Endothelial cell of umbilical vein (primary cell): ENCODE measurements at regions of chr7 and their contacts with region 1.

Region 1: DNA sequence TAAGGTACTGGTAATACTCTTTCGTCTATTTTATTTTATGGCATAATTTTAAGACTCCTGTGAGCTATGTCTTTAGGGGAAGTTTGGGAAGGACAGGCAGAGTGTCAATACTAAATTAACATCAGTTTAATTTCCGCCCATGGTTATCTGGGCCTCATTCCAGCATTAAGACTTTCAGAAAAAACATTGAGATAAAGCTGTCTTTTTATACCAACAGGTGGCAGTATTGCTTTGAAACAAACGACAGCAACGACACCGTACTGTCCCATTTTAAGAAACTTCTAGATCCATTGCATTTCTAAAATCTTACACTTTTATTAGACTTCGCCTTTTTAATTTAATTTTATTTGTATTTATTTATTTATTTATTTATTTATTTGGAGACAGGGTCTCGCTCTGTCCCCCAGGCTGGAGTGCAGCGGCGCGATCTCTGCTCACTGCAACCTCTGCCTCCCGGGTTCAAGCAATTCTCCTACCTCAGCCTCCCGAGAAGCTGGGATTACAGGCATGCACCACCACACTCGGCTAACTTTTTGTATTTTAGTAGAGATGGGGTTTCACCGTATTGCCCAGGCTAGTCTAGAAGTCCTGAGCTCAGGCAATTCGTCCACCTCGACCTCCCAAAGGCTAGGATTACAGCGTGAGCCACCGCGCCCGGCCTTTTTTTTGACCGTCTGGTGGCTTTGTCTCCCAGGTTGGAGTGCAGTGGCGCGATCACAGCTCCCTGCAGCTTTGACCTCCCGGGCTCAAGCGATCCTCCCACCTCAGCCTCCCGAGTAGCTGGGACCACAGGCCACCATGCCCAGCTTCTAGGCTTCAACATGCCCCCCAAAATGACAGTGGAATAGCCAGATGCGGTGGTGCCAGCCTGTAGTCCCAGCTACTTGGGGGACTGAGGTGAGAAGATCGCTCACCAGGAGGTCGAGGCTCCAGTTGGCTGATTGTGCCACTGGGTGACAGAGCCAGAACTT is 78.7 kb upstream of the C1GALT1 start:
- DNase-seq: peak; percentile 70
- H3K4me3 ChIP-seq: peak overlapping the region in 1 of 3 experiments; percentile 8
- H3K27ac ChIP-seq: no peak overlapping the region
- H3K4me1 ChIP-seq: peaks cover 15% of the 10 kb centered on the region
- H3K27me3 ChIP-seq: no peaks in the 10 kb centered on the region
- CTCF ChIP-seq: peak; percentile 45 to 49
- POLR2A ChIP-seq: no peak

Region 2: GRCh38 chr7:6607651-6608051 is 496.0 kb before region 1 on chr7:
- CTCF ChIA-PET with region 1: no interaction called
- POLR2A ChIA-PET with region 1: no interaction called
- dilution Hi-C with region 1: no loop called
- intact Hi-C with region 1: no loop called
- DNase-seq: no peak
- H3K4me3 ChIP-seq: no peak overlapping the region
- H3K27ac ChIP-seq: no peak overlapping the region
- H3K4me1 ChIP-seq: no peaks in the 10 kb centered on the region
- H3K27me3 ChIP-seq: no peaks in the 10 kb centered on the region
- CTCF ChIP-seq: no peak
- POLR2A ChIP-seq: no peak

Region 3: DNA sequence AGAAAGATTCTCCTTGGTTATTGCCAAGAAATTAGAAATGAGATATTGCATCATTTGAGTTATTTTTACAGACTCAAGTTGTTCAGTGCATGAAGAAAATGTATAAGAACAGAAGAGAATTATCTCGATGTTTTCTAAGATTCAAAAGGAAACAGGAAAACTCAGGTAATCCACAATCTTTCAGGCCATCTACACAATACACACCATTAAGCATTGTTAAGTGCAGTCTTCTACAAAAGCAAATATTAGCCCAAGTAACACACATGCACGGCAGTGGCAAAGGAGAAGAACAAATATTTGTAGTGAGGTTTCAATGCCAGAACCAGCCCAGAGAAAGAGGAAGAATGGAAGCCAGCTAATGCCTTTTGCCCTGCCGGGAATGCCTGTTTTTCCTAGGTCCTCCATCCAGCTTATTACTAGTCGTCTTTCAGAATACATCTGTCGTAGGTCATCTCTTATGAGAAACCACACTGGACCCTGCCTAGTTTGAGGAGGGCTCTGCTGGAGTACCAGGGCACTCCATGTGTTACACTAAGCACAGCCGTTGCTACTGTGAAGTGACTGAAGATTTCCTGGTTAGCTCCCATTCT is 11.2 kb after region 1 on chr7:
- CTCF ChIA-PET with region 1: interaction called, 18 read pairs
- POLR2A ChIA-PET with region 1: no interaction called
- dilution Hi-C with region 1: no loop called
- intact Hi-C with region 1: no loop called
- DNase-seq: no peak
- H3K4me3 ChIP-seq: no peak overlapping the region
- H3K27ac ChIP-seq: no peak overlapping the region
- H3K4me1 ChIP-seq: no peaks in the 10 kb centered on the region
- H3K27me3 ChIP-seq: peaks cover 0 to 2% of the 10 kb centered on the region in 2 experiments
- CTCF ChIP-seq: no peak
- POLR2A ChIP-seq: no peak

Region 4: GRCh38 chr7:7182156-7183060 is 78.8 kb after region 1 on chr7 and contains the start of gene C1GALT1:
- CTCF ChIA-PET with region 1: interaction called, 12 read pairs
- POLR2A ChIA-PET with region 1: interaction called, 4 read pairs
- dilution Hi-C with region 1: no loop called
- intact Hi-C with region 1: loop called (anchors 1 kb)
- DNase-seq: peak; percentile 99
- H3K4me3 ChIP-seq: peak within 1 kb of the TSS; percentile 77 to 95 (median 91)
- H3K27ac ChIP-seq: peak within 1 kb of the TSS; percentile 78
- H3K4me1 ChIP-seq: peaks cover 22% of the 10 kb centered on the region
- H3K27me3 ChIP-seq: no peaks in the 10 kb centered on the region
- CTCF ChIP-seq: peak; percentile 24 to 56
- POLR2A ChIP-seq: peak; percentile 94
- total RNA-seq, gene C1GALT1: 21.9 and 31.1 TPM in 2 replicates

Region 5: DNA sequence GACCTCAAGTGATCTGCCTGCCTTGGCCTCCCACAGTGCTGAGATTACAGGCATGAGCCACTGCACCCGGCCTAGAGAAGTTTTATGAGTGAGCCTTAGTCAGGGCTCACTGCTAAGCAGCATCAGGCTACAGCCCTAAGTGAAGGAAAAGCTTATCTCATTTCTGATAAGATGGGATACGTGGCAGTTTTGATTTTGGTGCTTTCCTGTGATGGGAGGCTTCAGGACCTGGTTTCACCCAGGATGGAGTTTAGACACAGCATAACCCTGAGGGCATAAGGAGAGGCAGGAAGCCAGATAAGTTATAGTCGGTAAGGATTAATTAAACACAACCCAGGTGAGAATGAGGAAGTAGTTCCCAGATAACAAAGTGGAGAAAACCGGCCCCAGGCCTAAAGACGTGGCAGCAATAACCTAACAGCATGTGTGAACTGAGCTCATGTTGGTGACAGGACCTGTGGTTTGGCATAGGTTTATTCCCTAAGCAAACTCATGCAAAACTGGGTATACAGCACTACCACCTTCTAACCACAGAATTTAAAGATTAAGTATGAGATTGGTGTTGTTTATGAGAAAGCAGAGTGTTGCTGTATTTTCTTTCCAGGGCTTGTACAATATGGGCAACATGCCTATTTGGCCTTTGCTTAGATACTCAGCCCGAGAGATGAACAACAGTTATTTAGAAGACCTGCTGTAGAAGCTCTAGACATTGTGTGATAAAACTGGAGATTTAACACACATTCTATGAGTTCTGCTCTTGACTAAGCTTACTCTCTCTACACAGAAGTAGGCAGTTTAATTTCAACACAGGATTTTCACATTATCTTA is 312.6 kb after region 1 on chr7:
- CTCF ChIA-PET with region 1: interaction called, 22 read pairs
- POLR2A ChIA-PET with region 1: no interaction called
- dilution Hi-C with region 1: no loop called
- intact Hi-C with region 1: no loop called
- DNase-seq: no peak
- H3K4me3 ChIP-seq: no peak overlapping the region
- H3K27ac ChIP-seq: no peak overlapping the region
- H3K4me1 ChIP-seq: no peaks in the 10 kb centered on the region
- H3K27me3 ChIP-seq: no peaks in the 10 kb centered on the region
- CTCF ChIP-seq: no peak
- POLR2A ChIP-seq: no peak

Region 6: GRCh38 chr7:7438851-7439250 is 335.2 kb after region 1 on chr7:
- CTCF ChIA-PET with region 1: interaction called, 13 read pairs
- POLR2A ChIA-PET with region 1: no interaction called
- dilution Hi-C with region 1: no loop called
- intact Hi-C with region 1: loop called (anchors 2 kb)
- DNase-seq: peak; percentile 78
- H3K4me3 ChIP-seq: no peak overlapping the region
- H3K27ac ChIP-seq: peak overlapping the region; percentile 35
- H3K4me1 ChIP-seq: peaks cover 20% of the 10 kb centered on the region
- H3K27me3 ChIP-seq: no peaks in the 10 kb centered on the region
- CTCF ChIP-seq: no peak
- POLR2A ChIP-seq: no peak

Region 7: GRCh38 chr7:8217200-8218068 is 1113.8 kb after region 1 on chr7:
- CTCF ChIA-PET with region 1: no interaction called
- POLR2A ChIA-PET with region 1: no interaction called
- dilution Hi-C with region 1: no loop called
- intact Hi-C with region 1: loop called (anchors 2 kb)
- DNase-seq: peak; percentile 67
- H3K4me3 ChIP-seq: no peak overlapping the region
- H3K27ac ChIP-seq: no peak overlapping the region
- H3K4me1 ChIP-seq: no peaks in the 10 kb centered on the region
- H3K27me3 ChIP-seq: no peaks in the 10 kb centered on the region
- CTCF ChIP-seq: peak; percentile 32 to 40
- POLR2A ChIP-seq: no peak